Left ventricle myocardium inferior (tissue), 1 donor: ENCODE measurements at regions of chr3 and their contacts with region 1.

Region 1: DNA sequence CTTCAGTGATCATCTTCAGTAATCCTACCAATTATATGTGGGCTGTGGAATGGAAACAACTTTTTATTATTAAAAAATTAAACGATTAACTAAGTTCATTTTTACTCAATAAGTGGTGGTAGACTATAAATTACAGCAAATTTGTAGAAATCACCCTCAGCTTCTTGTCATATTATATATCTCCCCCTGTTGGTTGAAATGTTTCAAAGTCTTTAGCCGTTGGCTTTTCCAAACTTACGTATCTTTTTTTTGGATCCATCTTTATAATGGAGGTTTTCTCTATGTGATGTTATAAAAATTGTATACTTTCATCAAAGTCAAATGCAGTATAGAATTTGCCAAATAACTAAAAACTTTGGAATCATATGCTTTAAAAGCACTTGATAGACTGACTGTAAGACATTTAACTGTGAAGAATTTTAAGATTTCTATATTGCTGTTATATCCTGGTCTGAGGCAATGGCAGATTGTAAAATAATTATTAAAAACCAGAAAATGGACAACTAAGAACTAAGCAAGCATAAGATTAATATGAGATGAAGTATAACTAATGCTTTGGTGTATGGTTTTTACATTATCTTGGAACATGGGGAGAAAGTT is 44.7 kb downstream of the ATP11B start:
- DNase-seq: no peak
- H3K4me3 ChIP-seq: no peak overlapping the region
- H3K27ac ChIP-seq: no peak overlapping the region
- H3K4me1 ChIP-seq: no peaks in the 10 kb centered on the region
- H3K27me3 ChIP-seq: no peaks in the 10 kb centered on the region
- CTCF ChIP-seq: peak; percentile 62

Region 2: DNA sequence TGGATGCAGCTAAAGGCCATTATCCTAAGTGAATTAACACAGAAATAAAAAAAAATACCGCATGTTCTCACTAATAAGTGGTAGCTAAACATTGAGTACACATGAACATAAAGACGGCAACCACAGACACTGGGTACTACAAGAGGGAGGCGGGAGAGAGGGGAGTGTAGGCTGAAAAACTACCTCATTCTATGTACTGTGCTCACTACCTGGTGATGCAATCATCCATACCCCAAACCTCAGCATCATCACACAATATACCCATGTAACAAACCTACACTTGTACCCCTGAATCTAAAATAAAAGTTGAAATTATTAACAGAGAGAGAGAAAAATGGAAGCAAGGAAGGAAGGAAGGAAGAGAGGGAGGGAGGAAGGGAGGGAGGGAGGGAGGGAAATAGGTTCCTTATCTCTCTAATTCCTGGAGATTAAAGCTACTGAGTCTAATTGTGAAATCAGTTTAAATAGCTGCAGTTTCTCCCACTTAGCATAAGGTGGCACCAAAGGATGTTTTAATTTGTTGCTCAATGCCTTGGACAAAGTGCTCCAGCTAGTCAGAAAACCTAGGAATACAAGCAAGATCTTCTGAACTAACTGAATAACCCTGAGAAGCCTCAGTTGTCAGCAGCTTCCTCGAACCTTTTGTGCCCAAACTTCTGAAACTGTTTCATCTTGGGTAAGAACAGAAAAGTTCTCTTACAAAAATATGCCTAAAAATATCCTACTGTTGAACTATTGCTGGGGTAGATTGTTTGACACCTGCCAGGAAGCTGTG is 124.0 kb before region 1 on chr3:
- intact Hi-C with region 1: loop called (anchors 5 kb)
- DNase-seq: no peak
- H3K4me3 ChIP-seq: no peak overlapping the region
- H3K27ac ChIP-seq: peak overlapping the region; percentile 34
- H3K4me1 ChIP-seq: peaks cover 15% of the 10 kb centered on the region
- H3K27me3 ChIP-seq: no peaks in the 10 kb centered on the region
- CTCF ChIP-seq: peak; percentile 69

Region 3: DNA sequence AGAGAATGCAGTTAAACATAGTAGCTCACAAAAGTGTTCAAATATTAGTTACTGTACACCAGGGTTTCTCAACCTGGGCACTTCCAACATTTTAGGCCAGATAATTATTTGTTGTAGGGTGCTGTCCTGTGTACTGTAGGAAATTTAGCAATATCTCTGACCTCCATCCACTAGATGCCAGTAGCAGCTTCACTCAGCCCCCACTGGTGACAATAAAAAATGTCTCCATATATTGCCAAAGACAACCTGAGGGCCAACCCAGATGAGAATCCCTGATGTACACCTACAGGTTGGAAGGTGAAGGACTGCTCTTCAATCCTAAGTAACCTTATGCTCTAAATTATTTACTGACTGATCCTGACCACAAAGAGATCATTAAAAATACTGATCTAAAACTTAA is 109.9 kb after region 1 on chr3:
- intact Hi-C with region 1: no loop called
- DNase-seq: no peak
- H3K4me3 ChIP-seq: no peak overlapping the region
- H3K27ac ChIP-seq: no peak overlapping the region
- H3K4me1 ChIP-seq: no peaks in the 10 kb centered on the region
- H3K27me3 ChIP-seq: no peaks in the 10 kb centered on the region
- CTCF ChIP-seq: no peak